AG04450 (cell line): ENCODE measurements at regions of chr17 and their contacts with region 1.

Region 1: GRCh38 chr17:2532146-2532720 is 20.5 kb upstream of the METTL16 start:
- DNase-seq: no peak
- H3K4me3 ChIP-seq: no peak overlapping the region
- H3K27ac ChIP-seq: no peak overlapping the region
- H3K27me3 ChIP-seq: no peaks in the 10 kb centered on the region
- CTCF ChIP-seq: no peak

Region 2: GRCh38 chr17:2571523-2572303 is 39.5 kb after region 1 on chr17:
- CTCF ChIA-PET with region 1: no interaction called
- POLR2A ChIA-PET with region 1: no interaction called
- DNase-seq: no peak
- H3K4me3 ChIP-seq: no peak overlapping the region
- H3K27ac ChIP-seq: no peak overlapping the region
- H3K27me3 ChIP-seq: peaks cover 10% of the 10 kb centered on the region
- CTCF ChIP-seq: no peak

Region 3: DNA sequence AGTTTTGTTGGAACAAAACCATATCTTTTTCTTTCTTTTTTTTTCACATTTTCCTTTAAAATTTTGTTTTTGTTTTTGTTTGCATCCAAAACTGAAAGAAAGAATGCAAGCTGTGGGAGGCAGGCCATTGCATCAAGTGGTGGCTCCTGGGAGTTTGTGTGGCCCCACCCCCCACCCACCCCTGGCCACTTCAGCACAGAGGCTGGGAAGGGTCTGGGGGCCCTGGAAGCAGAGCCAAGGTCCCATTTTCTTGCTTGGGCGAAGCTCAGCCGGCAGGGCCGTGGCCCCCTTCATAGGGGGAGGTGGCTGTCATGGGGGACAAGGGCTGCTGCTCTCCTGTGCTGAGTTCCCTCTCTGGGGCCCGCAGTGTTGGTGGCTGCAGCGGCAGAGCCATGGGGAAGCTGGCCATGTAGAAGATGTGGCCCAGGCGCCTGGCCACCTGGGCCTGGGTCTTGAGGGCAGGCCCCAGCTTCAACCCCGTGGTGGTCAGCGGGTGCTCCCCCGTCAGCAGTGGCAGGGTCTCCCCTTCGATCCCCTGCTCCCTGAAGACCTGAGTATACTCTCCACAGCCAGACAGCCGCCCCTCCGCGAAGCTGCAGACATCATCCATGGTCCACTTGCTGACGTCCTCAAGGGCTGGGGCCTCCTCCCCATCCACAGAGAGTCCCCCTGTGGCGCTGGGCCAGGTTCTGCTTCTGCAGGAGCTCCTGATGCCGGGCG is 81.0 kb after region 1 on chr17:
- CTCF ChIA-PET with region 1: interaction called, 10 read pairs
- POLR2A ChIA-PET with region 1: no interaction called
- DNase-seq: no peak
- H3K4me3 ChIP-seq: no peak overlapping the region
- H3K27ac ChIP-seq: no peak overlapping the region
- H3K27me3 ChIP-seq: no peaks in the 10 kb centered on the region
- CTCF ChIP-seq: no peak